Tibial artery (tissue), 4 donors: ENCODE measurements at regions of chr3 and their contacts with region 1.

Region 1: GRCh38 chr3:152071924-152072323 is 196.8 kb upstream of the MBNL1 start:
- DNase-seq: no peak
- H3K4me3 ChIP-seq: no peak overlapping the region
- H3K27ac ChIP-seq: no peak overlapping the region
- H3K4me1 ChIP-seq: peaks cover 0 to 36% (median 4%) of the 10 kb centered on the region in 4 donors
- H3K27me3 ChIP-seq: no peaks in the 10 kb centered on the region
- CTCF ChIP-seq: peak; percentile 27 to 29

Region 2: DNA sequence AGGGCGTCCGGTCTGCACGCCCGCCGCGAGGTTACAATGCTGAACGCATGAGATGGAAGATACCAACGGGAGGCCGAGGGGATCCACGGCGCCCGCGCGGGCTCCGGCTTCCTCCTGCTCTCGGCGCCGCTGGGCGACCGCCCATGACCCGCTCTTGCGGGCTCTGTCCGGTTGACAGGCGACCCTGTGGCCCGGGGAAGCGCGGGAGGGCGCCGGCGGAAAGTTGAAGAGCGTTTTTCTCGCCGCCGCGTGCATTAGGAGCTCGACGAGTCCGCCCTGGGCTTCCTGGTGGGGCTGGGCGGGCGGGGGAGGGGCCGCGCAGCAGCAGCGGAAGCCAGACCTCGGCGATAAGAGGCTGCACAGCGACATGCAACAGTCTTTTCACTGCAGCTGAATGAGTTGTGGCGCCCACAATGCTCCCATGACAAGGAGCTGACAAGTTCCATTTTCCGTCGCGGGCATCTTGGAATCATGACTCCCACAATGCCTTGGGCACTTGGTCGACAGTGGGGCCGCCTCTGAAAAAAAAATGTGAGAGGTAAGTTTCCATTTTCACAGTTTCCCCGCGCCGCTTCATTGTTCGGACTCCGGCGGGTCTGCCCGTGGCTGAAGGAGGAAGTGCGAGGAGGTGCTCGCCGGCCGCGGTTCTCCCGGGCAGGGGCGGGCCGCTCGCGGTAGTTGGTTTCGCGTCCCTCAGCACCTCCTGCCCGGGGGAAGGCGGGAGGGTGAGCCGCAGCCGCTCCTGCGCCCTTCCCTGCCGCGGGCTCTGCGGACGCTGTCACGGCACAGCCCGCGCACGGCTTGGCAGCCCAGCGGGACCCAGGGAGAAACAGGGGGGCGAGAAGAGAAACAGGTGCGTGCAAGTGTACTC is 196.9 kb after region 1 on chr3 and contains the start of gene MBNL1:
- intact Hi-C with region 1: loop called (anchors 10 kb)
- DNase-seq: peak; percentile 81 to 88
- H3K4me3 ChIP-seq: peak within 1 kb of the TSS; percentile 71 to 80
- H3K27ac ChIP-seq: peak within 1 kb of the TSS; percentile 93 to 99
- H3K4me1 ChIP-seq: peaks cover 0 to 49% (median 18%) of the 10 kb centered on the region in 4 donors
- H3K27me3 ChIP-seq: no peaks in the 10 kb centered on the region
- CTCF ChIP-seq: no peak

Region 3: GRCh38 chr3:152444029-152444641 is 372.2 kb after region 1 on chr3:
- intact Hi-C with region 1: loop called (anchors 10 kb)
- DNase-seq: no peak
- H3K4me3 ChIP-seq: peak overlapping the region in 1 of 2 donors; percentile 1
- H3K27ac ChIP-seq: peak overlapping the region; percentile 39 to 50
- H3K4me1 ChIP-seq: peaks cover 0 to 94% (median 44%) of the 10 kb centered on the region in 4 donors
- H3K27me3 ChIP-seq: no peaks in the 10 kb centered on the region
- CTCF ChIP-seq: peak; percentile 61 to 80

Region 4: DNA sequence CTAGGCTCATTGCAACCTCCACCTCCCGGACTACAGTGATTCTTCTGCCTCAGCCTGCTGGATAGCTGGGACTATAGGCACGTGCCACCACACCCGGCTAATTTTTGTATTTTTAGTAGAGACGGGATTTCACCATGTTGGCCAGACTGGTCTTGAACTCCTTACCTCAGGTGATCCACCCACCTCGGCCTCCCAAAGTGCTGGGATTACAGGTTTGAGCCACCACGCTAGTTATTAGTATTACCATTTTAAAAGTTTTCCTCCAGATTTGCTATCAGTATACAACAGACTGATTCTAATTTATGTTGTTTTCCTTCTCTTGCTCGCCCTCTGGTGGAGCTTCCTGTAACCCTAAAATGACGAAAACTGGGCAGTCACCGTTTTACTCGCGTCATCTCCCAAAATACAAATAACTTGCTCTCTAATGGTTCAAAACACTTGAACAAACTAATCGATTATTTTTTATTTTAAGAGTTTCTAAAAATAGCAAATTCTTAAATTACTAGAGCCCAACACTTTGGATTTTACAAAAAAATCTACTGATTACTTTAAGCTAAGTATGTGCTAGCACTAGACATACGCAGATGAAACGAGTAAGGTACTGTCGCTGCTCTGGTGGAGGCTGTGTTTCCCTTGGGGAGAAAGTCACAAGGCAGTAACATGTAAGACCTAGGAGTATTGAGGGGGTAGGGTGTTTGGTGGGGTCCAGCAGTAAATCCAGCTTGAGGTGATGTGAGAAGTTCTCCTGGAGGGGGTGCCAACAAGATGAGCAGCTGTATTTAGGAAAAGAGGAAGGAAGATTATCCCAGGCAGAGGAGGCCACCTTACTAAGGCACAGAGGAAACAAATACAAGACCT is 400.1 kb after region 1 on chr3:
- intact Hi-C with region 1: loop called (anchors 5 kb)
- DNase-seq: peak; percentile 80 to 81
- H3K4me3 ChIP-seq: peak overlapping the region; percentile 29 to 34
- H3K27ac ChIP-seq: peak overlapping the region; percentile 39 to 72
- H3K4me1 ChIP-seq: peaks cover 0 to 18% (median 7%) of the 10 kb centered on the region in 4 donors
- H3K27me3 ChIP-seq: no peaks in the 10 kb centered on the region
- CTCF ChIP-seq: peak; percentile 74 to 79

Region 5: DNA sequence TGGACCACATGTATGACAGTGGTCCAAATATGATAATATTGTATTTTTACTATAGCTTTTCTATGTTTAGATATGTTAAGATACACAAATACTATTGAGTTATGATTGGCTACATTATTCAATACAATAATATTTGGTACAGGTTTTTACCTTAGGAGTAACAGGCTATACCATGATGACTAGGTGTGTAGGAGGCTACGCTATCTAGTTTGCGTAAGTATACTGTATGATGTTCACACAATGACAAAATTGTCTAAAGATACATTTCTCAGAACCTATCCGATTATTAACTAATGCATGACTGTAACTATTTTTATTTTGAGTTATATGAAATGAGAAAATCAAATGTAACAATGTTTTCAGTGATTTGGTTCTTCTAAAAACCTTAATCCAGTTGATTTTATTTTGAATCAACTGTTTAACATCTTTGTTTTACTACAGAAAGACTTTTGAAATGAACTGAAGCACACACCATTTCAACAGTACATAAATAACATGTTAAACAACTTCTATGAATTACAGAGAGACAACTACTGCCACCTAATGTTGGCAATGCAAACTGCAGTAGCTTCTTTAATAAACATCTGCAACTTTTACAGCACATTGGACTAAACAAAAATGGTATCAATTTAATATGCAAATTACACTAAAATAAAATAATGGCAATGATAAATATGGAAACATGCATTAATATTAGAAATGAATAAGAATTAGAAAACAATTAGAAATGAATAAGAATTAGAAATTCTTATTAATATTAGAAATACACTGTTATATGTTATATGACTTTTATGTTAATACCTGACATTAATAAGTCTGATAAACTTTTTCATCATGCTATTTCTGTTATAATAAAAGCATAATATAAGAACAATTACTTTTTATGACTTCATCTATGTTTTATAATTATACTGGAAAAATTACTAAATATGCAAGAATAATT is 452.5 kb after region 1 on chr3:
- intact Hi-C with region 1: loop called (anchors 10 kb)
- DNase-seq: peak in 1 of 2 donors; percentile 58
- H3K4me3 ChIP-seq: no peak overlapping the region
- H3K27ac ChIP-seq: no peak overlapping the region
- H3K4me1 ChIP-seq: peaks cover 0 to 4% (median 0%) of the 10 kb centered on the region in 4 donors
- H3K27me3 ChIP-seq: no peaks in the 10 kb centered on the region
- CTCF ChIP-seq: peak; percentile 83 to 86